Heart left ventricle (tissue), 16 donors: ENCODE measurements at regions of chr7 and their contacts with region 1.

Region 1: DNA sequence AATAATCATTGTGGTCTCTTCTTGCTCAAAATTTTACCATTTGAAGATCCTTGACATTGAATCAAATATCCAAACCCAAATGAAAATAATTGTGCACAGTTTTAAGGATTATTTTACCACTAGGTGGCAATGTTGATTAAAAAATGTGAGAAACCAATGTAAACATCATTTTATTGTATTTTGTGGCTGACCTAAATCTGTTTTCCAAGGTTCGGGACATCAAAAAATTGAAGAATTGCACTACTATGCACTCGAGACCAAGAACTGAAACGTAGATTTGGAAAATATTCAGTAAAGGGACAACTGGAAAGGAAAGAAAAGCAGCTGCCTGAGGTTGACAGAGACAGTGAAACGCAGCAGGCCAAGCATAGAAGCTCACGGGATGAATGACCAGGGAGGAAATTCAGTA is 259.3 kb downstream of the SNX13 start:
- DNase-seq: no peak
- ATAC-seq: peak in 1 of 4 donors; percentile 20
- H3K4me3 ChIP-seq: no peak overlapping the region
- H3K27ac ChIP-seq: peak overlapping the region in 1 of 12 donors; percentile 75
- H3K4me1 ChIP-seq: peaks cover 0 to 45% (median 16%) of the 10 kb centered on the region in 12 donors
- H3K27me3 ChIP-seq: no peaks in the 10 kb centered on the region
- CTCF ChIP-seq: peak; percentile 33 to 72 (median 62)
- POLR2A ChIP-seq: no peak

Region 2: GRCh38 chr7:17474724-17475344 is 206.1 kb before region 1 on chr7:
- intact Hi-C with region 1: no loop called
- DNase-seq: no peak
- ATAC-seq: no peak
- H3K4me3 ChIP-seq: no peak overlapping the region
- H3K27ac ChIP-seq: no peak overlapping the region
- H3K4me1 ChIP-seq: no peaks in the 10 kb centered on the region
- H3K27me3 ChIP-seq: no peaks in the 10 kb centered on the region
- CTCF ChIP-seq: no peak
- POLR2A ChIP-seq: no peak

Region 3: DNA sequence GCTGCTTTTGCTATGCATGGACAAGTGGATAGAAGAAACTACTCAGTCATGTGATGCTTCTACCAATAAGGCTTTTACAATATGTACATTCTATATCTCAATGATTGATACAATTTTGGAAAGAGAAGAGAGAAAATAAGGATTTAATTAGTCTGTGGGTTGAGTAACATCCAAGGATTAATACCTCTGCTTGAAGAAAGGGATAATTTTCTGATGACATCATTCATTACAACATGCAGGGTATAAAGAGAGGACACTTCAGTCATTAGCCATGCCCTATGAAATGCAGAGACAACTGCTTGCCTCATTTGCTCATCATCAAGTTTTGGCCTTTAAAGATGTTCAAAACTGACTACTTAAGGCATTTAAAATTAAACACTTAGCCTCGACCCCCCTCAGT is 145.2 kb before region 1 on chr7:
- intact Hi-C with region 1: no loop called
- DNase-seq: no peak
- ATAC-seq: no peak
- H3K4me3 ChIP-seq: no peak overlapping the region
- H3K27ac ChIP-seq: no peak overlapping the region
- H3K4me1 ChIP-seq: peaks cover 0 to 21% (median 0%) of the 10 kb centered on the region in 12 donors
- H3K27me3 ChIP-seq: no peaks in the 10 kb centered on the region
- CTCF ChIP-seq: no peak
- POLR2A ChIP-seq: no peak

Region 4: DNA sequence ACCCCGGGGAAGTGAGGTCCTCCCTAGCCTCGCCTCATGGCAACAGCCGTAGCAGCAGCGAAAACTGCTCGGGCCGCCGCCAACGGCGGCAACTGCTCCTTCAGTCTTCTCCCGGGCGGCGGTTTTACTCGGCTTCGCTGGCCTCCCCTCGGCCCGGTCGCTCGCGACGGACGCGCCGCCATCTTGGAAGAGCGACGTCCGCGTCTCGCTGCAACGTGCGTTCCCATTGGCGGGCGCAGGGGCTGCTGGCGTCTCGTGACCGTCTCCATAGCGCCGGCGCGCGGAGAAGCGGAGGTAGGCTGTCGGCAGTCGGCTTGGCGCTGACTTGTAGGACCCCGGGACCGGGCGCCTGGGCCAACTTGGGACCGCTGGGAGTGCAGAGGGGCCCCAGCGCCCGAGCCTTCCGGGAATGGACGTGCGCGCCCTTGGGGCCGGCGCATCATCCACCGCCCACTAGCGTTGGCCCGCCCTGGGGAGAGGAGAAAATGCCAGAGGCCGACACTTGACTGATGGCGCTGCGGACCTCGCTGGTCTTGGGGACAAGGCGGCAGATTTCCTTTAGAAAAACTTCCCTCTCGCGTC is 259.4 kb after region 1 on chr7 and contains the start of gene SNX13:
- intact Hi-C with region 1: loop called in 1 of 10 experiments (anchors 5 kb)
- DNase-seq: peak; percentile 92 to 97 (median 95)
- ATAC-seq: peak; percentile 96 to 99 (median 98)
- H3K4me3 ChIP-seq: peak within 1 kb of the TSS; percentile 80 to 94 (median 88)
- H3K27ac ChIP-seq: peak within 1 kb of the TSS; percentile 85 to 98 (median 96)
- H3K4me1 ChIP-seq: peaks cover 0 to 52% (median 32%) of the 10 kb centered on the region in 12 donors
- H3K27me3 ChIP-seq: no peaks in the 10 kb centered on the region
- CTCF ChIP-seq: peak in 10 of 12 donors; percentile 26 to 65 (median 37)
- POLR2A ChIP-seq: peak in 1 of 2 donors; percentile 78
- total RNA-seq, gene SNX13: 36.1 to 59.6 (median 50.9) TPM

Region 5: DNA sequence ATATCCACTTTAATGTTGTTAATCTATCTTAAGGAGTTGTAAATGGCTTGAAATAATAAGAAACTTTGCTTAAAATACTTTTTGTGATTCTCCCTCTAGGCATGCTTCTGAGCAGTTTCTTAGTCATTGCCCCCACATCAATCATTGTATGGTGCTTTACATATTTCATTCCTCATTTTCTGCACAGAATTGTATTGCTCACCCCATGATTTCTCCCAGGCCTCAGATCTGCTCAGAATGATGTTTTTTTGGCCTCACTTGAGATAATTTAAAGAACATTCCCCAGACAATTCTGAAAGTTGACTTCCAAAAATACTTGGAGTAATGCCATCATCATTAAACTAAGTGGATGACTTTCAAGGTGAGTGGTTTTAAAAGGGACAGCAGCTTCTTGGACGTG is 428.8 kb after region 1 on chr7:
- intact Hi-C with region 1: no loop called
- DNase-seq: no peak
- ATAC-seq: no peak
- H3K4me3 ChIP-seq: no peak overlapping the region
- H3K27ac ChIP-seq: no peak overlapping the region
- H3K4me1 ChIP-seq: peaks cover 0 to 6% (median 0%) of the 10 kb centered on the region in 12 donors
- H3K27me3 ChIP-seq: no peaks in the 10 kb centered on the region
- CTCF ChIP-seq: no peak
- POLR2A ChIP-seq: no peak